ENCODE measurements at regions of chr21 and their contacts with region 1.

Region 1: DNA sequence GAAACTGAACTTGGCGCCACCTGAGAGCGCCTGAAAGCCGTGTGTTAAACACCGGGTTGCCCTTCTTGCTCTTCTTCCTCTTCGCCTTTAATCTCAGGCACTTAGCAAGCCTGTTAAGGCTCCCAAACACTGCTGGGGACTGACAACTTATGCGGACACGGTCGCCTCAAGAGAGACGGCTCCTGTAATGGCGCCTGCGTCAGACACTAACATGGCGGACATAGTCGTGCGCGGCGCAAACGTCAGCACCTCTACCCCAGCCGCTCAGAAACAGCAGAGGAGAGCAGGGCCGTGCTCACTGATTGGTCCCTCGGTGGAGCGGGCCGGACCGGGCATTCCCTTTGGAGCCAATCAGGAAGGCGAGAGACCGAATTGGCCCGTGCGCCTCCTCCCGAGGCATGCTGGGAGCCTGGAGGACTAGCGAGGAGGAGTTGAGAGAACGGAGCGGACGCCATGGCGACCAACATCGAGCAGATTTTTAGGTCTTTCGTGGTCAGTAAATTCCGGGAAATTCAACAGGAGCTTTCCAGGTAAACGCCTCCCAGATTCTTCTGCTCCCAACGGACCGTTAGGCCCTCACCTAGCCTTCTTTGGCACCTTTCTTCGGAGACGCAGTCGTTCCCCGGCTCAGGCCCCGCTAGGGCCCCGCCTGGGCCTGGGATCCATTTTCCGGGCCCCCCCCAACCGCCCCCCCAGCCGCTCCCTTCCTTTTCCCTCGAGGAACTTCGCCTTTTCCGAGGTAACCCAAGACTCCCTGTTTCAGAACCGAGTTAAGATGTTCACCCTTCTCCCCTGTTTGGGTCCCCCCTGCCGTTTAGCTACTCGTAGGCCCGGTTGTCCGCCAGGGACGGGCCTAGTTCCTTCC is at the start of gene SON:
- DNase-seq: peak; percentile 98
- H3K4me3 ChIP-seq: peak within 1 kb of the TSS; percentile 99
- H3K27ac ChIP-seq: peak within 1 kb of the TSS; percentile 95
- H3K4me1 ChIP-seq: peaks cover 27% of the 10 kb centered on the region
- CTCF ChIP-seq: no peak
- total RNA-seq, gene SON: 243 and 335 TPM in 2 replicates

Region 2: GRCh38 chr21:32612075-32612998 is 930.5 kb before region 1 on chr21 and contains the start of gene CFAP298:
- CTCF ChIA-PET with region 1: no interaction called
- POLR2A ChIA-PET with region 1: no interaction called
- intact Hi-C with region 1: loop called (anchors 5 kb)
- DNase-seq: peak; percentile 89
- H3K4me3 ChIP-seq: peak within 1 kb of the TSS; percentile 88
- H3K27ac ChIP-seq: peak within 1 kb of the TSS; percentile 80
- H3K4me1 ChIP-seq: peaks cover 10% of the 10 kb centered on the region
- CTCF ChIP-seq: no peak
- total RNA-seq, gene CFAP298: 43.6 and 56.0 TPM in 2 replicates

Region 3: DNA sequence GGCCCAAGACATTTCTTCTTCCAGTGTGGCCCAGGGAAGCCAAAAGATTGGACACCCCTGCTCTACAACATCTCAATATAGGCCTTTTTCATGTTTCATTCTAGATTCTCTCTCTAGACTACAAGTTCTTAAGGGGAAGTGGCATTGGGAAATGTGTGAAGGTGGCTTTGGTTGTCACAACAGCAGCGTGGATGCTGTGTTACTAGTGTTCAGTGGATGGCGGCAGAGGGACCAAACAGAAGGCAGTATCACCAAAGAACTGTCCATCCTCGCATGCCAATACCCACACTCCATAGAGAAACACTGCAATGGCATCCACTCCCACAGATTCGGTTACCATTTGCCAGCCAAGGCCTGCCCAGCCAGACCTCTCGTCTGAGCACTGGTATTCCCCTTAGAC is 337.4 kb before region 1 on chr21:
- CTCF ChIA-PET with region 1: no interaction called
- POLR2A ChIA-PET with region 1: no interaction called
- intact Hi-C with region 1: loop called (anchors 5 kb)
- DNase-seq: peak; percentile 74
- H3K4me3 ChIP-seq: peak overlapping the region; percentile 56
- H3K27ac ChIP-seq: peak overlapping the region; percentile 88
- H3K4me1 ChIP-seq: peaks cover 68% of the 10 kb centered on the region
- CTCF ChIP-seq: peak; percentile 61

Region 4: GRCh38 chr21:33479679-33480480 is 63.0 kb before region 1 on chr21 and contains the start of gene TMEM50B:
- CTCF ChIA-PET with region 1: no interaction called
- POLR2A ChIA-PET with region 1: interaction called, 4 read pairs
- intact Hi-C with region 1: loop called (anchors 1 kb)
- DNase-seq: peak; percentile 96
- H3K4me3 ChIP-seq: peak within 1 kb of the TSS; percentile 88
- H3K27ac ChIP-seq: peak within 1 kb of the TSS; percentile 60
- H3K4me1 ChIP-seq: peaks cover 14% of the 10 kb centered on the region
- CTCF ChIP-seq: peak; percentile 42; the same call in 1 of the 2 replicates
- total RNA-seq, gene TMEM50B: 18.9 and 30.3 TPM in 2 replicates

Region 5: DNA sequence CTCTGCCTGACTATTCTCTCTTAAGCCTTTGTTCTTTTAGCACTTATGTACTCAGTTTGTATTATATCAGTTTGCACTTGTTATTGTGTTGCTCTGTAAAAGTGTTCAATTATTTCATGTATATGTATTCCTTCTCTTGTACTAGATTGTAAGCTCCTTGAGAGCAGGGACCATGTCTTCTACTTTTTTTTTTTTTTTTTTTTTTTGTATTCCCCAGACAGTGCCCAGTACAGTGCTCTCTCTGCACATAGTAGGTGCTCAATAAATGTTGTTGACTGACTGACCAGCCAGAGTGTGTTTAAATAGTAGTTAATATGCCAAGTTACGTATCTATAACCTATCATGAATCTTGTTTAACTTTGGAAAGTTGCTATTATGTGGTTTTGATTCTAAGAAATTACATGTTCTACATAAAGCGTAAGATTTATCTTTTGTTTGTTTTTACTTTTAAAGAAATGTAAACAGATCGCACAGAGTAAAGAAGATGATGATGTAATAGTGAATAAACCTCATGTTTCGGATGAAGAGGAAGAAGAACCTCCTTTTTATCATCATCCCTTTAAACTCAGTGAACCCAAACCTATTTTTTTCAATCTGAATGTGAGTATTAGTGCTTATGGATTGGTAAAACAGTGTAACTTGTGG is 16.0 kb after region 1 on chr21:
- CTCF ChIA-PET with region 1: no interaction called
- POLR2A ChIA-PET with region 1: interaction called, 14 read pairs
- intact Hi-C with region 1: no loop called
- DNase-seq: no peak
- H3K4me3 ChIP-seq: no peak overlapping the region
- H3K27ac ChIP-seq: no peak overlapping the region
- H3K4me1 ChIP-seq: no peaks in the 10 kb centered on the region
- CTCF ChIP-seq: no peak

Region 6: DNA sequence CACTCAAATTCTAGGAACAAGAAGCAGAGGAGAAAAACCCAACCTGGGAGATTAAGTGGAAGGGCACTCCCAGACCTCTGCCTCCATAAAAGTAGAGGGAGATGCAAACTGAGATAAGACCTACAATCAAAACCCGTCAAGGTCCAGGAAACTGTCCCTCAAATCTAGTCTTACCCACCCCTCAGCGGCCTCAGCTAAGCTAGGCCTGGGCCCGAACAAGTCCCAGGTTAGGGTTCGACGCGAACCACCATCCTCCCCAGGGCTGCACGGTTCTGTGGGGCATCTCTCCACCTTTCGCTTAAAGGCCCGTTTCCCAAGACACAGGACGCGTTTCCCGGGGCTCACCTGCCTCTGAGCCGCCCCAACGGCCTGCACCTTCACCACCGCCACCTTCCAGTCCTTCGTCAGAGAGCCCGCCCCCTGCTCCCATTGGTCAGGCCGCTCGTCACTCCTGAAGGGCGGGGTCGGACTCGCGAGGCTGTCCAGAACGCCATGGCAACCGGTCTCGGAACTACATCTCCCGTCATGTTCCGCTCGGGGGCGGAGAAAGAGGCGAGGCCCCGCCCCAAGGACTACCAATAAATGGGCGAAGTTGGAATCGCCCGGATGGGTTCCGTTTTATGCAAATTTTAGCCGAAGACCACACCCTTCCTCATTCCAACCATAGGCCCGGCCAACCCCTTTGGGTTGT is 98.6 kb after region 1 on chr21 and contains the start of gene CRYZL1:
- CTCF ChIA-PET with region 1: no interaction called
- POLR2A ChIA-PET with region 1: no interaction called
- intact Hi-C with region 1: loop called (anchors 2 kb)
- DNase-seq: peak; percentile 100
- H3K4me3 ChIP-seq: peak within 1 kb of the TSS; percentile 83
- H3K27ac ChIP-seq: peak within 1 kb of the TSS; percentile 55
- H3K4me1 ChIP-seq: peaks cover 15% of the 10 kb centered on the region
- CTCF ChIP-seq: no peak
- total RNA-seq, gene CRYZL1: 19.8 and 26.4 TPM in 2 replicates

Measured in OCI-LY7 (cell line).